Esophagus muscularis mucosa (tissue), 4 donors: ENCODE measurements at regions of chr6 and their contacts with region 1.

Region 1: DNA sequence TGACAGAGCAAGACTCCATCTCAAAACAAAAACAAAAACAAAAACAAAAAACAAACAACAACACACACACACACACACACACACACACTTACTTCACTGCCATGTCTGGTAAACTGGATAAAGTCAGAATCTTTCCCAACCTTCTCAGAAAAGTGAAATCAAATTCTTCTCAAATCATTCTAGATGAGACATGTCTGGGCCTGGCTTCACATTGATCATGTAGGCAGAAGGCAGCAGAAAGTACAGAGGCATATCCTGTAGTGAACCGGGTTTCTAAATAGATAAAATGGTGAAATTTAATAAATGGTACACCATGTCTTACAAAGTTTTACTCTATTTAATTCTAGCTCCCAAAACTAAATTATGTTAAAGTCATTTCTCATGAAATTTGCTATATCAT is 14.9 kb upstream of the MRS2 start:
- DNase-seq: no peak
- H3K4me3 ChIP-seq: no peak overlapping the region
- H3K27ac ChIP-seq: no peak overlapping the region
- H3K4me1 ChIP-seq: no peaks in the 10 kb centered on the region
- H3K27me3 ChIP-seq: no peaks in the 10 kb centered on the region
- CTCF ChIP-seq: no peak
- EP300 ChIP-seq: no peak
- POLR2A ChIP-seq: no peak

Region 2: GRCh38 chr6:24228681-24229255 is 159.1 kb before region 1 on chr6:
- intact Hi-C with region 1: no loop called
- DNase-seq: no peak
- H3K4me3 ChIP-seq: no peak overlapping the region
- H3K27ac ChIP-seq: peak overlapping the region in 1 of 4 donors; percentile 21
- H3K4me1 ChIP-seq: peaks cover 0 to 28% (median 27%) of the 10 kb centered on the region in 4 donors
- H3K27me3 ChIP-seq: no peaks in the 10 kb centered on the region
- CTCF ChIP-seq: no peak
- EP300 ChIP-seq: no peak
- POLR2A ChIP-seq: no peak

Region 3: GRCh38 chr6:24283043-24283985 is 104.5 kb before region 1 on chr6:
- intact Hi-C with region 1: loop called (anchors 2 kb)
- DNase-seq: no peak
- H3K4me3 ChIP-seq: peak overlapping the region in 3 of 4 donors; percentile 16 to 42 (median 19)
- H3K27ac ChIP-seq: no peak overlapping the region
- H3K4me1 ChIP-seq: peaks cover 5 to 13% (median 12%) of the 10 kb centered on the region in 4 donors
- H3K27me3 ChIP-seq: no peaks in the 10 kb centered on the region
- CTCF ChIP-seq: peak; percentile 52 to 56 (median 55)
- EP300 ChIP-seq: no peak
- POLR2A ChIP-seq: no peak

Region 4: GRCh38 chr6:24960991-24961475 is 573.2 kb after region 1 on chr6:
- intact Hi-C with region 1: no loop called
- DNase-seq: no peak
- H3K4me3 ChIP-seq: no peak overlapping the region
- H3K27ac ChIP-seq: no peak overlapping the region
- H3K4me1 ChIP-seq: no peaks in the 10 kb centered on the region
- H3K27me3 ChIP-seq: no peaks in the 10 kb centered on the region
- CTCF ChIP-seq: no peak
- EP300 ChIP-seq: no peak
- POLR2A ChIP-seq: no peak